CD4-positive, alpha-beta memory T cell (primary cell): ENCODE measurements at regions of chr17 and their contacts with region 1.

Region 1: DNA sequence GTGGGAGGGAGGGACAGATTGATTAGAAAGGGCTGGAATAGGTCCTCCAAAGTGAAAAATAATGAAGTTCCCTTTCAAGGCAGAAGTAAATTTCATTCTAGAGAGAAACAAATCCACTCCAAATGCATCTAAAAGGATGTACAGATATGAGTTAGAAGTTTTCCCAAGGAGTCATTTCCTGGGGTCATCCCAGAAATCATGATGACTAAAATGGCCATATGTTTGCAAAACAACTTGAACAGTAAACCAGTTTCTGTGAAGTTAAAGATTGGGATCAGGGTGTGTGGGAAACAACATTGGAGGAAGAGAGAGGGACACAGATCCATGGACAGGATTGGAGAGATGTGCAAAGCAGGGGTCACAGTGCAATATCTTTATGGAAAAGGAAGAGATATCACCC is 32.5 kb upstream of the ARHGAP44 start:
- DNase-seq: no peak
- H3K4me3 ChIP-seq: no peak overlapping the region
- H3K4me3 Mint-ChIP-seq: peak overlapping the region in 1 of 8 donors; percentile 22
- H3K27ac ChIP-seq: no peak overlapping the region
- H3K27ac Mint-ChIP-seq: no peak overlapping the region
- H3K4me1 ChIP-seq: no peaks in the 10 kb centered on the region
- H3K4me1 Mint-ChIP-seq: no peaks in the 10 kb centered on the region
- H3K27me3 ChIP-seq: no peaks in the 10 kb centered on the region
- H3K27me3 Mint-ChIP-seq: no peaks in the 10 kb centered on the region

Region 2: DNA sequence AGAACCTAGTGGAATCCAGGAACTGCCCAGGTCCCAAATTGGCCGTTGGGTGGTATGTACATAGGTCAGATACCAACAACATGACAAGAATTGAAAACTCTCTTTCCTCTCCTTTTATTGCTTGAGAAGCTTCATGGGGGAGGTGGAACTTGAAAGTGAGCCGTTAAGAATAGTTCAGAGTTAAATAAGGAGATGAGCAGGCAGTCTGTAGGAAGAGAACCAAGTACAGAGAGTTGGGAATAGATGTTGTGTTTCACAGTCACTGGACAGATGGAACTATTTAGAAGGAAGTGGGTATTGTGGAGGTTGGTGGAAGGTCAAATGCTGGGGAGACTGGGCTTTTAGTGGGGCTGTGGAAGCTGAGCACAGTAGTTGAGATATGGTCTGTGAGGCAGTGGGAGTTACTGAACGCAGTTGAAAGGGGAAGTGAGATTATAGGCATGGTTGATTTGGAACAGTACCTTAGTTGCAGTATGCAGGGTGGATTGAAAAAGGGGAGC is 58.9 kb after region 1 on chr17:
- CTCF ChIA-PET with region 1: no interaction called
- POLR2A ChIA-PET with region 1: no interaction called
- intact Hi-C with region 1: loop called (anchors 10 kb)
- DNase-seq: no peak
- H3K4me3 ChIP-seq: no peak overlapping the region
- H3K4me3 Mint-ChIP-seq: no peak overlapping the region
- H3K27ac ChIP-seq: no peak overlapping the region
- H3K27ac Mint-ChIP-seq: no peak overlapping the region
- H3K4me1 ChIP-seq: no peaks in the 10 kb centered on the region
- H3K4me1 Mint-ChIP-seq: no peaks in the 10 kb centered on the region
- H3K27me3 ChIP-seq: no peaks in the 10 kb centered on the region
- H3K27me3 Mint-ChIP-seq: no peaks in the 10 kb centered on the region